Heart left ventricle (tissue), 16 donors: ENCODE measurements at regions of chr1 and their contacts with region 1.

Region 1: GRCh38 chr1:40630488-40631381 is 34.7 kb downstream of the RIMS3 start:
- DNase-seq: no peak
- ATAC-seq: peak in 3 of 4 donors; percentile 32 to 67 (median 51)
- H3K4me3 ChIP-seq: no peak overlapping the region
- H3K27ac ChIP-seq: no peak overlapping the region
- H3K4me1 ChIP-seq: peaks cover 0 to 12% (median 6%) of the 10 kb centered on the region in 12 donors
- H3K27me3 ChIP-seq: no peaks in the 10 kb centered on the region
- CTCF ChIP-seq: peak in 9 of 12 donors; percentile 31 to 58 (median 45)
- POLR2A ChIP-seq: no peak

Region 2: GRCh38 chr1:40315239-40315794 is 315.4 kb before region 1 on chr1:
- intact Hi-C with region 1: no loop called
- DNase-seq: peak; percentile 78 to 89 (median 80)
- ATAC-seq: peak; percentile 78 to 93 (median 89)
- H3K4me3 ChIP-seq: peak overlapping the region; percentile 6 to 60 (median 47)
- H3K27ac ChIP-seq: peak overlapping the region in 1 of 12 donors; percentile 41
- H3K4me1 ChIP-seq: peaks cover 0 to 44% (median 17%) of the 10 kb centered on the region in 12 donors
- H3K27me3 ChIP-seq: peaks cover 15 to 51% (median 25%) of the 10 kb centered on the region in 9 donors
- CTCF ChIP-seq: peak; percentile 84 to 96 (median 92)
- POLR2A ChIP-seq: no peak

Region 3: DNA sequence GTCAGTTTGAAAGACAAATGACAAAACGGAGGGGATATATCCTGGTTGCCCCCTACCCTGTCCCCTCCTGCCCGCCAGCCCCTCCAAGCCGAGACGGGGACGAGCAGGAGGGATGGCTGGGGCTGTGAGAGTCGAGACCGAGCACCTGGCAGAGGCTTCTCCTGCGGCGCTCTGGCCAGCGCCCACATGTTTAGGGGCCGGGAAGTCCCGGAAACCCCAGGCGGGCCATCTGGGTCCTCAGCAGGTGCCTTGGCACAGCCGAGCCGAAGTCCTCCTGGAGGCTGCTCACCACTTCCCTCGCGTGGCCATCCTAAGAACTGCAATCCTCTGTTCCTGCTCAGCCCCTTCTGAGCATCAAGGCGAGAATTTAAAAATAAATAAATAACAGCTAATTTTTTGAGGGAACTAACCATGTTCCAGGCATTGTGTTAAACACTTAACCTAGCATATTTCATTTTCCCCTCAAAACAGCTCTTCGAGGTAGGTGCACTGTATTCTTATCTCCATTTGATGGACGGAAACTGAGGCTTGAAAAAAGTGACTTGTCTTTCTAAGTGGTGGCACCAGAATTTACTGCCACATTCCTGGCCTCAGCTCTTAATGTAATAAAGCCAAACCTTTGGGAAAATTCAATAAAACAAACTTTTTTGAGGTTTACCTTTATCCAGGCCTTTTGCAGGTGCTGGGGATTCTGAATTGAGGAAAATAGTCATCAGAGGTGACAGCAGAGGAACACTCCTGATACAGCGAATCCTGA is 38.2 kb after region 1 on chr1:
- intact Hi-C with region 1: loop called in 5 of 10 experiments (anchors 5 kb)
- DNase-seq: peak; percentile 67 to 87 (median 78)
- ATAC-seq: peak in 3 of 4 donors; percentile 64 to 70 (median 70)
- H3K4me3 ChIP-seq: peak overlapping the region in 2 of 12 donors; percentile 2 to 21
- H3K27ac ChIP-seq: no peak overlapping the region
- H3K4me1 ChIP-seq: peaks cover 0 to 18% (median 7%) of the 10 kb centered on the region in 12 donors
- H3K27me3 ChIP-seq: no peaks in the 10 kb centered on the region
- CTCF ChIP-seq: peak; percentile 92 to 98 (median 94)
- POLR2A ChIP-seq: no peak

Region 4: DNA sequence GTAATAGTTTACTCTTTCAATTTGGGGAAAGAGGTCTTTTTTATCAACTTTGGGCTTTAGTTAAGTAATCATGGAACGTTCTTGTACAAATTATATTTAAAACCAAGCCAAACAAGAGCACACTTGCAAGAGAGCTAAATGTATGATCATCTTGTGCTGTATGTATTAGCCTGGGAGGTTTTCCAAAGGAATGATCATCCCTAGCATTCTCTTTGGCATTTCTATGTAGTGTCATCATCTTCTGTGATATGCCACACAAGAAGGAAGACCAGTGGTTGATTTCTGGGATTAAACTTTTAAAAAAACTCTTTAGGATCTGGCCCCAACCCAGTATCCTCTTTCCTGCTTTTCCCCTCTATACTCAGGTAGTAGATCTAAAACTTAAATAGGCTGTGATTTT is 114.4 kb after region 1 on chr1:
- intact Hi-C with region 1: no loop called
- DNase-seq: no peak
- ATAC-seq: no peak
- H3K4me3 ChIP-seq: no peak overlapping the region
- H3K27ac ChIP-seq: peak overlapping the region in 1 of 12 donors; percentile 20
- H3K4me1 ChIP-seq: peaks cover 0 to 68% (median 36%) of the 10 kb centered on the region in 12 donors
- H3K27me3 ChIP-seq: no peaks in the 10 kb centered on the region
- CTCF ChIP-seq: no peak
- POLR2A ChIP-seq: no peak